RWPE1 (cell line): ENCODE measurements at regions of chr13 and their contacts with region 1.

Region 1: DNA sequence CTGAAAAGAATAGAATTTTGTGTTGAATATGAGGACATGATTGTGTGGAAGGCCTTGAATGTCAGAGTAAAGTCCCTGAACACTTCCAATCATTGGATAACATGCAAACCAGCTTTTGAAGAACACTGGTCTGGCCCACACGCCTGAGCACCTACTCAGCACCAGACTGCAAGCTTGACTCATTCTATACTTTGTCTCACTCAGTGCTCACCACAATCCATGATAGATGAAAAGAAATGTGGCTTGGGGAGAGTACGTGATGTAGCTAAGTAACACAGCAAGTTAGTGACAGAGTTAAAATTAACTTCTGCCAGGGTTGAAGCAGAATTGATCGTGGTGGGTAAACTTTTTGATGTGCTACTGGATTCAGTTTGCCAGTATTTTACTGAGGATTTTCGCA is 12.0 kb downstream of the DLEU7 start:
- DNase-seq: no peak
- H3K27ac ChIP-seq: no peak overlapping the region
- CTCF ChIP-seq: no peak

Region 2: DNA sequence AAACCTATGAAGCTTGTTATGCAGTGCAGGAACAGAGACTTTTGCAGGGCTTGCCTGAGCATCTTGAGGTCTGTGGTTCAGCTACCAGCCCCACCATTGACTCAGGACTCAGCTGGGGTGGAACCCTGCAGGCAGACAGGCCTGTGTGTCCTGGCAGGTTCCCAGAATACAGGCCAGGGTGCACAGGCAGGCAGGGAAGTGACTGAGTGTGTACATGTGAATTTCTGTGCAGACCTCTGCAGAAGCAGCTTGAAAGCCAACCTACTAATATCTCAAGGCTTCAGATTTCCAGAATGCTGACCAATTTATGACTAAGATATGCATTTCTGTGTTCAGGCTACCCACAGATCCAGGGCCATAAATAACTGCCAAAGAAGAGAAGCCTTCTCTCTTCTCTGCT is 242.4 kb before region 1 on chr13:
- CTCF ChIA-PET with region 1: no interaction called
- POLR2A ChIA-PET with region 1: no interaction called
- DNase-seq: peak; percentile 37
- H3K27ac ChIP-seq: peak overlapping the region; percentile 83
- CTCF ChIP-seq: no peak

Region 3: DNA sequence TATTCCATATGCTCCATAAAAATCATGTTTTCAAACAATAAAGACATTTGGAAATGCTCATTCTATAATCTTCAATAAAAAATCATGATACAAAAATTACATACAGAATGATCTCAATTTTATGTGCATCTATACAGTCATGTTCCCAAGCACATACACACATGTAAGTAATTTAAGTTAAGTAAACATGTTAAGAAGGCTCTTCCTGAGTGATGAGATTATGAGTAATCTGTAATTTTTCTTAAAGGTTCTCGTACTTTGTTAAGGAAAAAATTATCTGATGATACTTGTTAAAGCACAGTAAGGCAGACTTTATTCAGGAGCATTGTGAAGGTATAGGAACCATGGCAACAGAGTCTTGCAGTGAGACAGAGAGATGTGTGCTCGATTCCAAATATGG is 42.0 kb after region 1 on chr13:
- CTCF ChIA-PET with region 1: interaction called, 10 read pairs
- POLR2A ChIA-PET with region 1: no interaction called
- DNase-seq: no peak
- H3K27ac ChIP-seq: no peak overlapping the region
- CTCF ChIP-seq: no peak